Activated naive CD4-positive, alpha-beta T cell treated with anti-CD3 and anti-CD28 coated beads for 36 hours (primary cell): ENCODE measurements at regions of chr19 and their contacts with region 1.

Region 1: DNA sequence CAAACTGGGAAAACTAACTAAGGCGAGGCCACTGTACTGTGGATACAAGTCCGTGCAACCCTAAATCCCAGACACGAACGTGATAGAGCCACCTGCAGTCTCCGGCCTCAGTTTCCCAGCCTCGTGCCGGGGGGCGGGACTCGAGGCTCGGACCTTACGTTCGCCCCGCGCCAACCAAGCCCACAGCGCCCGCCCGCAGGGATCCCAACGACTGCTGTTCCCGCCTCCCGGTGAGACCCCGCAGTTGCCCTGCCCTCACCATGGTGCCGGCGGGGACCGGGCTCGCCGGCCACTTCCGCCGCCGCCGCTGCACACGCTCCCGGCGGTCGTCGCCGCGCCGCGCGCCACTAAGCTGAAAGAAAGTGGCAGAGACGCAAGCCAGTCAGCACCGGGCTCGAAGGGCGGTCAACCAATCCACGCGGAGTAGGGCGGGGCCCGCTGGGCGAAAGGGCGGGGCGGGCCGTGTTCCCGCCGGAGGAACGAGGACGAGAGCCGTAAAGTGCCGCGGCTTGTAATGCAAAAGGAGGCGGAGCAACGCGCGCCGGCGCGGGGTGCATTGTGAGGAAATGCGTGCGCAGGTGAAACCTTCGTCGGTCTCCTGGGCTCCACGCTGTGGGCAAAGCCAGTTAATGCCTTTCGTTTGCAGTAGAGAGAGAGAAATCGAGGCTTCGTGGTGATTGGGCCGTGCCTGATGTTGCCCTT is at the start of gene LSM4:
- DNase-seq: peak; percentile 100
- H3K4me3 Mint-ChIP-seq: peak within 1 kb of the TSS; percentile 93
- H3K27ac Mint-ChIP-seq: peak within 1 kb of the TSS; percentile 98
- H3K4me1 Mint-ChIP-seq: peaks cover 51% of the 10 kb centered on the region
- H3K27me3 Mint-ChIP-seq: no peaks in the 10 kb centered on the region
- total RNA-seq, gene LSM4: 439 to 451 TPM

Region 2: GRCh38 chr19:18152444-18152816 is 170.5 kb before region 1 on chr19:
- CTCF ChIA-PET with region 1: no interaction called
- intact Hi-C with region 1: loop called (anchors 1 kb)
- DNase-seq: peak; percentile 100
- H3K4me3 Mint-ChIP-seq: peak overlapping the region; percentile 79
- H3K27ac Mint-ChIP-seq: peak overlapping the region; percentile 93
- H3K4me1 Mint-ChIP-seq: peaks cover 22% of the 10 kb centered on the region
- H3K27me3 Mint-ChIP-seq: no peaks in the 10 kb centered on the region

Region 3: DNA sequence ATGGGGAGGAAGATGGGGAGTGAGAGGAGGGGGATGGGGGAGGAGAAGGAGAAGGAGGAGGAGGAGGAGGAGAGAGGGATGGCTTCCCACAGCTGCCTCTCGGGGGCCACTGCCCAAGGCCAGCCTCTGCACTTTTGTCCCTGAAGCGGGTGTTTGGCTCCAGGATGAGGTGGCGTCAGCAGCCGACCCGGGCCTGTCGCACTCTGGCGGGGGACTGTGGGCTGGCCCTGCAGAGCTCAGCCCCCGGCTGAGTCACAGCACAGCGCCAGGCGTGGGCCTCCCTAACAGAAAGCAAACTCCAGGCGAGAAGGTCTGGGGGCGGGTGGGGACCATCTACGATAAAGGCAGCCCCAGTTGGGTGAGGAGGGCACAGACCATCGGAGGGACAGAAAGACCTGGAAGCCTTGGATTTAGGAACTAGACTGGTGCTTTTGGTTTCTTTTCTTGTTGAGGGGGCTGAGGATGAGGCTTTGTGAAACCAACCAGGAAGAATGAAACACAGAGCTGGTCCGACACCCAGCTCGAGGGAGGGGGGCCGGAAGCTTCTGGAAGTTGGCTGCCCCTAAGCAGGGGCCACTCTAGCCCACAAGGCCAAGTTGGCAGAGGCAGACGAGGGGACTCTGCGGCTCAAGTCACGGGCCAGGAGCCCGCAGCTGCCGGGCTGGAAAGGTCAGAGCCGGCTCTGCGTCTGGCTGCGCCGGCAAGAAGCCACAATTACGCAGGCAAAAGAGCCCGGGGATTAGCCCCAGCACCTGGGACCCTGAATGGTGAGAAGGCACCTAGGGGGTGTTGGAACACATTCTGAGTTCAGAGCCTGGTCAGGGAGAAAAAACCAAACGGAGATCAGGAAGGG is 18.2 kb before region 1 on chr19:
- CTCF ChIA-PET with region 1: interaction called, 12 read pairs
- intact Hi-C with region 1: loop called (anchors 1 kb)
- DNase-seq: peak; percentile 87
- H3K4me3 Mint-ChIP-seq: peak overlapping the region; percentile 97
- H3K27ac Mint-ChIP-seq: peak overlapping the region; percentile 100
- H3K4me1 Mint-ChIP-seq: peaks cover 42% of the 10 kb centered on the region
- H3K27me3 Mint-ChIP-seq: no peaks in the 10 kb centered on the region

Region 4: DNA sequence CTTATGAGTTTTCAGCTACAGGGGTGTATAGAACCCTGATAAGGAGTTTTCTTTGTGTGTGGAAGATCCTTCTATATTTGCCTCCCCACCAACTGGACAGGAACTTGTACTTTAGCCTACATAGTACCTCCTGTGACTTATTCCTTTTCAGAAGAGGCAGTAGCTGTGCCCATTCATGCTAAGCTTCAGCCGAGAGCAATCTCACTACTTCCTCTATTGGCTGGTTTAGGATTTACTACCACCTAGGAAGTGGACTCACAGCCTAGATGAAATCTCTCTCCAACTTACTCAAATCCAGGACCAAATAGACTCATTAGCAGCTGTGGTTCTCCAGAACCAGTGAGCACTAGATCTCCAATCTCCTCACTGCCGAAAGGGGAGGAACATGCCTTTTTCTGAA is 263.4 kb after region 1 on chr19:
- CTCF ChIA-PET with region 1: no interaction called
- intact Hi-C with region 1: no loop called
- DNase-seq: no peak
- H3K4me3 Mint-ChIP-seq: no peak overlapping the region
- H3K27ac Mint-ChIP-seq: no peak overlapping the region
- H3K4me1 Mint-ChIP-seq: peaks cover 23% of the 10 kb centered on the region
- H3K27me3 Mint-ChIP-seq: no peaks in the 10 kb centered on the region